Lower leg skin (tissue), 4 donors: ENCODE measurements at regions of chr2 and their contacts with region 1.

Region 1: GRCh38 chr2:11446733-11447248 is 19.2 kb downstream of the E2F6 start:
- DNase-seq: peak; percentile 59 to 67
- H3K4me3 ChIP-seq: no peak overlapping the region
- CTCF ChIP-seq: peak in 1 of 3 donors; percentile 39
- POLR2A ChIP-seq: no peak

Region 2: DNA sequence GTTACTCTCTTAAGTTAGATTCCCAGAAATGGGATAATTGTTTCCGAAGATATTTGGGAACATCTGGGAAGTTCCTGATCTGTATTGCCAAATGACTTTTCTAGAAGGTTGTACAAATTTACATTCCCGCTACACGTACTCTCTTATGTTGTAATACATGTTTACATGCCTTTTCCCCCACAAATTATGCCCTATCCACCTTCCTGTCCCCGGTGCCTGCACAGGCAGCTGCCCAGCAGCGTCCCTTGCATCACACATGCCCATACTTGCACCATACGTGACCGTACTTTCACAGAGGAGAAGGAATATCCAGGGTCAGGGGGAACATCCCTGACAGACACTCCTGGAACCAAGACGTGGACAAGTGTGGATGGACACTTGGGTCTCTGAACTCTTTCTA is 1427.6 kb before region 1 on chr2:
- intact Hi-C with region 1: no loop called
- DNase-seq: no peak
- H3K4me3 ChIP-seq: no peak overlapping the region
- CTCF ChIP-seq: no peak
- POLR2A ChIP-seq: no peak

Region 3: DNA sequence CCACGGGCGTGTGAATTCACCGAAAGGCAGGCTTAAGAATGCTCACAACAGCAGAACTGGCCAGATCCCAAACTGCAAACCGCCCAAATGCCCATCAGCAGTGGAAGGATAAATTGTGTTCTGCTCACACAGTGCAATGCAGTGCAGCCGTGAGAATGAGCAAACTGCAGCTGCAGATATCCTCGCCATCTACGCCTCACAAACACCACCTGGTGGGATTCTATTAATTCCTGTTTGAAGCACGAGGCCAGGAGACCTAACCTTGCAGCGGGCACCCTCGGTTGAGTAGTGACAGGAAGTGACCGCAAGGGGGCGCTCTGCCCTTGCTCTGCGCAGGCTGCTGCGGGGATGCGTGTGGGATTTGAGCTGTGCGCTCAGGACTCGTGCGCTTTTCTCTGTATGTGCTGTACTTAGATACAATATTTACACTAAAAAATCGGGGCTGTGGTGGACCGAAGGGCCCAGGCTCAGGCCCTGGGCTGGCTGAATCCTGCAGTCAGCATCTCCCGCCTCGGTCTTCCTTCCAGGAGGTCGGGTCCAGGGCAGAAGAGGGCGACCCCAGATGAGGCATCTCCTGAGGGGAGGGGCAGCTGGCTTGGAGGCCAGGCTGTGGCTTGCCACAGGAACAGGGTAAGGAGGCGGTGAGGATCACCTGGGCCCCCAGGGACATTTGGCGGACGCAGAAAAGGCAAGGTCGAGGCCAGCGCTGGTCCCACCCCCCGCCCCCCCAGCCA is 614.4 kb before region 1 on chr2:
- intact Hi-C with region 1: loop called (anchors 10 kb)
- DNase-seq: peak; percentile 54 to 95
- H3K4me3 ChIP-seq: no peak overlapping the region
- CTCF ChIP-seq: peak in 1 of 3 donors; percentile 94
- POLR2A ChIP-seq: no peak

Region 4: DNA sequence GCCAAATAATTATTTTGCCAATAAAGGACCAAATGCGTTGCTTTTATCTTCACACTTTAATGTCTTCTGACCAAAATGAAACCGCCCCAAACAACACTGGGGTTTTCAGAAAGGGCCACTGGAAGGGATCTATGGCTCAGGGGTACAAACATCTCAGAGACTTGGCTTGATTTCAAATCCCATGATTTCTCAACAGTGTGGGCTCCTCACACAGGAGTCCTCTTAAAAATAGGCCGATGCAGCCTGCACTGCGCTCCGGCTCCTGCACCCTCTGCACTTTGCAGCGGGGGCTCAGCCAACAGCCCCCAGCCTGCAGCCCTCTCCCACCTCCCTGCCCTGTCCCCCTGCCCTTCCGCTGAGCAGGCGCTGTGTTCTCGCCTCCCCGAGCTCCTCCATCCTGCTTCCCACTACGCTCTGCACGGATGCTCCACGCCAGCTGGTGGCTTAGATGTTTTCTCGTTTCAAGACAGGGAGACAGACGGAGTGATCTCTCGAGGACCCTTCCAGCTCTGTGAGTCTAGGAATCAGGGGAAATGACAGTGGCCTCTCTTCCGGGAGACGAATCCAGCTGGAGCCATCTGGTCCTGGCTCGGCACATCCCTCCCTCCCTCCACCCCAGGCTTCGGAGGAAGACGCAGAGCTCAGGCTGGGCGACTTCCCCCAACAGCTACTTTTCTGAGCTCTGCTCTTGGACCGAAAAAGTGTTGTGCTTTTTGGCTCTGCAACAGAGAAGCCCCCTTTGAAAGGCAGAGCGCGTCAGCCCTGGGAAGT is 463.7 kb before region 1 on chr2:
- intact Hi-C with region 1: no loop called
- DNase-seq: peak in 1 of 2 donors; percentile 80
- H3K4me3 ChIP-seq: no peak overlapping the region
- CTCF ChIP-seq: no peak
- POLR2A ChIP-seq: no peak

Region 5: DNA sequence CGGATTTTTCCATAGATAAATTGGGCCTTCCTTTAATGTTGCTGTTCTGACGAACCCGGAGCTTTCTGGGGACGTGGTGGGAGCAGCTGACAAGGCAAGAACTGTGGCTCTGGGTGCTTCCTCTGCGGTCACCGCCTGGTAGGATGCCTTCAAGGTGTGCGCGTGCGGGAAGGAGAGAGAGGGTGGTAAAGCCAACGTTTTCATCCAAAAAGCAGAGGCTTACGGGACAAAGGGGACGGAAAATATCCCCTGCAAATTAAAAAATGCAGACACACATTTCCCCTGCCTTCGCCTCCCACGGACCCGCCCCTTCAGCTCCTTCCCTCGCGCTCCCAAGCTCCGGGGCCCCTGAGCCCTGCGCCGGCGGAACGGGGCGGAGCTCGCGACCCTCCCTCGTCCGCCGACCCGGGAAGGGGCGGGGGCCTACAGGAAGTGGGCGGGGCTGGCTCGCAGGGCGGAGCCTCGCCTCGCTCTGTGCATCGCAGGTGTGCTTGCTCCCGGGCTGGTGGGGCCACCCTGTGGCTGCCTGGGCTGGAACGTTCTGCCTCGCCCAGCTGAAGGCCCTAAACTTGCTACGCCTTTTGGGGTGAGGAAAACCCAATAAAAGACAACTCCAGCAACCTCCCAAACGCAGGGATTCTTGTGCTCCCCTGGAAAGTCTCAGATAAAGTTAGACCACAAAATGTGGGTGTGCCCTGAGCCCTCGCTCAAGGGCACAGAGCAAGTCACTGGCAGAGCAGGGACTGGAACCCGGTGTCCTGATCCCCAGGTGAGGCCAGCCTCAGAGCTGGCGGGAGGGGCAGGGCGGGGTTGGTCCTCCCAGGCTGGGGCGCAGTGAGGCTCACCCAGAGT is 317.0 kb before region 1 on chr2:
- intact Hi-C with region 1: loop called (anchors 5 kb)
- DNase-seq: peak in 1 of 2 donors; percentile 91
- H3K4me3 ChIP-seq: no peak overlapping the region
- CTCF ChIP-seq: no peak
- POLR2A ChIP-seq: no peak

Region 6: GRCh38 chr2:11357428-11357972 is 89.3 kb before region 1 on chr2:
- intact Hi-C with region 1: no loop called
- DNase-seq: no peak
- H3K4me3 ChIP-seq: no peak overlapping the region
- CTCF ChIP-seq: peak in 1 of 3 donors; percentile 98
- POLR2A ChIP-seq: no peak